ENCODE measurements at regions of chr3 and their contacts with region 1.

Region 1: DNA sequence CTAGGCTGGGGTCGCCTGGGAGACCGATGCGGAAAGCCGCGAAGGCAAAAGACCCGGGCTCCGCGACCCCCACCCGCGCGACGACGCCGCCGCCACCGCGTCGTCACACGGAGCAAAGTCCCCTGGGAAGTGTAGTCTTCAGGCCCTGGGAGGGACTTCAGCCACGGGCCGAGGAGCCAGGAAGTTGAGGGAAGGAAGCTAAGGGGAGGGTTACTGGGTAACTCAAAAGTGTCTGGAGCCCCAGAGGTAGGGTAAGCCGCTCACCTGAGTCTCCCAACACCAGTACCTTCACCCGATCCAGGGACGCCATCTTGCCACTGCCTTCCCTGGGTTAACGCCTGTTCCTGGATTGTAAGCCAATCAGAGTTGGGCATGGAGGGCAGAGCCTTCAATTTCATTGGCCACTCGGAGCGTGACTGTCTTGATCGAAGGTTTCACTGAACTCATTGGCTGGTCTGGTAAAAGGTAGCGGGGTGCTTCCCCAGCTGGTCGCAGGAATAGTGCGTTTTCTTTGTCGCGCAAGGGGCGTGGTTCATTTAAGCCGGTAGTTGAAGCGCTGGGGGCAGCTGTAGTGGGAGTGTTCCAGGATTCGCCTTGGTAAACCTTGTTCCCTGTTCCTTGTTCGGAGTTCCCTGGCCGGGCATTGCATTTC is at the starts of genes GTF2E1 and RABL3:
- DNase-seq: peak; percentile 96 to 99
- H3K4me3 ChIP-seq: peak within 1 kb of the TSS; percentile 81
- H3K4me3 Mint-ChIP-seq: peak within 1 kb of the TSS; percentile 88
- H3K27ac Mint-ChIP-seq: peak within 1 kb of the TSS; percentile 99
- H3K4me1 ChIP-seq: 0 out of 2 replicates have a peak, but pooled peaks cover 5% of the 10 kb centered on the region
- H3K4me1 Mint-ChIP-seq: peaks cover 24% of the 10 kb centered on the region
- H3K27me3 ChIP-seq: no peaks in the 10 kb centered on the region
- H3K27me3 Mint-ChIP-seq: no peaks in the 10 kb centered on the region
- CTCF ChIP-seq: no peak
- total RNA-seq, gene GTF2E1: 23.7 and 30.6 TPM in 2 replicates
- total RNA-seq, gene RABL3: 13.9 and 14.6 TPM in 2 replicates

Region 2: DNA sequence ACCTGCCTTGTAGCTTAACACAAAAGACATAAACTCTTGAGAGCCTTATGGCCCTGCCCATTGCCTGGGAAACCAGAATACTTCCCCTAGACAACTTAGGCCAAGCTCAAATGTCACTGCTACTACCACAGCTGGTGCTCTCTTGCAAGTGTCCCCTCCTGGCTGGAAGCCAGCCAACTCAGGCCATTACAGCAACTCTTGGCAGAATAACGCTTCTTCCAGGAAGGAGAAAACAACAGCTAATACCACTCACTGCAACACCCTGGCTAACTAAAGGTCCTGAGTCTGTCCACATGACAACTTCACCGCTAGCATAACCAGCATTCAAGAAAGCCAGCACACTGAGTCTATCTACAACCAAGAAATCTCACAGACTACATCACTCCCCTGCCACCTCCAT is 1496.5 kb before region 1 on chr3:
- CTCF ChIA-PET with region 1: no interaction called
- POLR2A ChIA-PET with region 1: no interaction called
- intact Hi-C with region 1: no loop called
- DNase-seq: no peak
- H3K4me3 ChIP-seq: no peak overlapping the region
- H3K4me3 Mint-ChIP-seq: no peak overlapping the region
- H3K27ac Mint-ChIP-seq: no peak overlapping the region
- H3K4me1 ChIP-seq: peaks cover 7% of the 10 kb centered on the region
- H3K4me1 Mint-ChIP-seq: no peaks in the 10 kb centered on the region
- H3K27me3 ChIP-seq: no peaks in the 10 kb centered on the region
- H3K27me3 Mint-ChIP-seq: no peaks in the 10 kb centered on the region
- CTCF ChIP-seq: no peak

Region 3: DNA sequence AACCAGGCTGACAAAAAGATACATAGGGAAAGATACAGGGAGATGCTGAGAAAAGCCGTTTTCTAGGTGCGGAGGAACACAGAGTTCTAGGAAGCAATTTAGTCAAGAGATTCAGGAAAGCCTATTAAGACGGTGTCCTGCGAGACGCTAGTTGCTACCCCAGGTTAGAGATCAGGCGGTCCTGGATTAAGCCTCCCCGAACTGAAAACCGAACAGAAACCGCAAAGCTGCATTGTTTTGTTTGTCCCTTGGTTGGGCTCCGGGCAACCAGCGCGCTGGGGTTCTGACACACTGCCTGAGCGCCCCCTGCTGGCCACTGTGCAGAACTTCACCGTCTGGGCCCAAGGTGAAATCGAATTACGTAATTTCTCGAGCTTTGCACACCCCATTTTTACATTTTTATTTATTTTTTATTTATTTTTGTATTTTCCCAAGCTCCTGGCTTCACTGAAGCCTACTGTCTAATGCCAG is 183.5 kb before region 1 on chr3:
- CTCF ChIA-PET with region 1: no interaction called
- POLR2A ChIA-PET with region 1: no interaction called
- intact Hi-C with region 1: loop called (anchors 2 kb)
- DNase-seq: peak; percentile 72 to 85
- H3K4me3 ChIP-seq: peak overlapping the region; percentile 16
- H3K4me3 Mint-ChIP-seq: peak overlapping the region; percentile 68
- H3K27ac Mint-ChIP-seq: peak overlapping the region; percentile 56
- H3K4me1 ChIP-seq: no peaks in the 10 kb centered on the region
- H3K4me1 Mint-ChIP-seq: peaks cover 14% of the 10 kb centered on the region
- H3K27me3 ChIP-seq: no peaks in the 10 kb centered on the region
- H3K27me3 Mint-ChIP-seq: peaks cover 3% of the 10 kb centered on the region
- CTCF ChIP-seq: peak; percentile 86 to 91

Region 4: GRCh38 chr3:120596116-120596852 is 146.0 kb before region 1 on chr3 and contains the start of gene NDUFB4:
- CTCF ChIA-PET with region 1: no interaction called
- POLR2A ChIA-PET with region 1: interaction called, 10 read pairs
- intact Hi-C with region 1: loop called (anchors 2 kb)
- DNase-seq: peak; percentile 95 to 98
- H3K4me3 ChIP-seq: peak within 1 kb of the TSS; percentile 74
- H3K4me3 Mint-ChIP-seq: peak within 1 kb of the TSS; percentile 87
- H3K27ac Mint-ChIP-seq: peak within 1 kb of the TSS; percentile 82
- H3K4me1 ChIP-seq: no peaks in the 10 kb centered on the region
- H3K4me1 Mint-ChIP-seq: no peaks in the 10 kb centered on the region
- H3K27me3 ChIP-seq: no peaks in the 10 kb centered on the region
- H3K27me3 Mint-ChIP-seq: peaks cover 5% of the 10 kb centered on the region
- CTCF ChIP-seq: no peak
- total RNA-seq, gene NDUFB4: 133 and 136 TPM in 2 replicates

Region 5: DNA sequence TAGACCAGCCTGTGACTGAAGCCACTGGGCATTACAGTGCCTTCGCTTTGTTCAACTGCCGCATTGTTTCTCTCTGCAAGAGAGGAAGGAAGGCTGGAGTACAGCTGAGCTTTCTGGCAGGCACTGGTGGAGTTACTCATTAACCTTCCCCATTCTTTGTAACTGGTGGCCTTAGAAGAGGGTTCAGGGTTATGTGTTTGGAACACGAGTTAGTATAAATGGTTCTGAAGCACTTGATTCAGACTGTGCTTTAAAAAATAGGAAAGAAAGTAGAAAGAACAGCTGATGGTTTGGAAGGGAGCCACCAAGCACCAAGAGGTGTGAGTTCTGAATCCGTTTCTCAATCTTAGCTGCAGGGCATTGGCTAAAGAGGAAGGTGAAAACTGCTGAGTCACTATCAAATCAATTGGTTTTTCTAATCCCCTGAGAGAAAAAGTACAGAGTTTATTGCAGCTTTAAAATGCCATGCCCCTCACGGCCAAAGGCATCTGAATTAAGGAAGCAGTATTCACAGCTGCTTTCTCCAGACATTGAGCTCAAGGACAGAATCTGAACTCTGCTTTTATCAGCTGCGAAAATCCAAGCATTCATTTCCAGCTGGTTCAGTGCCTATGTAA is 63.9 kb before region 1 on chr3:
- CTCF ChIA-PET with region 1: no interaction called
- POLR2A ChIA-PET with region 1: interaction called, 17 read pairs
- intact Hi-C with region 1: loop called (anchors 1 kb)
- DNase-seq: peak; percentile 60 to 65
- H3K4me3 ChIP-seq: peak overlapping the region; percentile 17
- H3K4me3 Mint-ChIP-seq: peak overlapping the region; percentile 76
- H3K27ac Mint-ChIP-seq: peak overlapping the region; percentile 93
- H3K4me1 ChIP-seq: peaks cover 46% of the 10 kb centered on the region
- H3K4me1 Mint-ChIP-seq: peaks cover 28% of the 10 kb centered on the region
- H3K27me3 ChIP-seq: no peaks in the 10 kb centered on the region
- H3K27me3 Mint-ChIP-seq: no peaks in the 10 kb centered on the region
- CTCF ChIP-seq: no peak

Region 6: DNA sequence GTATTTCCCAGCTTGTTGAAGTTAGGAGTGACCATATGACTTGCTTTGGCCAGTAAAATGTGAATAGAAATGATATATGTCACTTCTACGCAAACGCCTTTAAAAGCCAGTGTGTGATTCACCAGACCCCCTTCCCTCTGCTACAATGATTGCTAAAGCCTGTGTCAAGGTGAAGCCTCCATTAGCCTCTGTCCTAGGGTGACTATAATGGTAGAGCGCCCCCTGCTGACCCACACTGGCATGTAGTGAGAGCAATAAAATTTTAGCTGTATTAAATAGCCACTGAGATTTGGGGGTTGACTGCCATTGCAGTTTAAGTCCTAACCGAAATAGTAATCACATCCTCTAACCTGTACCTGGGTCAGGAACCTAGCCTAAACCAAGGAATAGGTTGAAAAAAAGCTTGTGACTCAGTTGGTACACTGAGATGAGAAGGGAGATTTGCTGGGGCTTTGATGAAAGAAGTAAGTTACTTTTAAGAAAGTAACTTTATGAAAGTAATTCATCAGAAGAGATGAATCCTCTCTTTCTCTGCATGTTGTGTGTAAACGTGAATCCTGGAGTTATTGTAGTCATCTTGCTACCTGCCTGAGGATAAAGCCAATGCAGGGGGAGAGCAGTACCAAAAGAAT is 52.8 kb after region 1 on chr3:
- CTCF ChIA-PET with region 1: no interaction called
- POLR2A ChIA-PET with region 1: no interaction called
- intact Hi-C with region 1: loop called (anchors 5 kb)
- DNase-seq: peak; percentile 55 to 62
- H3K4me3 ChIP-seq: no peak overlapping the region
- H3K4me3 Mint-ChIP-seq: no peak overlapping the region
- H3K27ac Mint-ChIP-seq: no peak overlapping the region
- H3K4me1 ChIP-seq: peaks cover 15% of the 10 kb centered on the region
- H3K4me1 Mint-ChIP-seq: no peaks in the 10 kb centered on the region
- H3K27me3 ChIP-seq: no peaks in the 10 kb centered on the region
- H3K27me3 Mint-ChIP-seq: no peaks in the 10 kb centered on the region
- CTCF ChIP-seq: peak; percentile 30 to 54

Measured in Caco-2 (cell line).